A673 (cell line): ENCODE measurements at regions of chr2 and their contacts with region 1.

Region 1: DNA sequence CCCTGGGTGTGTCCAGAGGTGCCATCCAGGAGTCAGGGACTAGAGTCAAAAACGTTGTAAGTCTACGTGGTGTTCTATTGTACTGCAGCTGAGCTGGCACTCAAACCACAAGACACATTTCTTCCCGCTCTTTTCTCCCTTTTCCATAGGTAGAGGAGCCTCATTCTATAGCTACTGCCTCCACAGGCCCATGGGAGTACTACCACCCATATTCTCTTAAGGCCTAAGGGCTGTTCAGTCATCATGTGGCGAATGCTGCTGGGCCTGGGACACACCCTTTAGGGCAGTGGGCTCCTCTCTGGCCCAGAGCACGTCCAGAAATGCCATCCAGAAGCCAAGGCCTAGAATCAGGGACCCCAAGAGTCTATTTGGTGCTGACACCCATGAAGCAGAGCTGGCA is 1271.7 kb downstream of the CNTNAP5 start:
- DNase-seq: no peak
- H3K4me3 ChIP-seq: no peak overlapping the region
- H3K27ac ChIP-seq: no peak overlapping the region
- H3K4me1 ChIP-seq: no peaks in the 10 kb centered on the region
- H3K27me3 ChIP-seq: no peaks in the 10 kb centered on the region
- CTCF ChIP-seq: no peak

Region 2: GRCh38 chr2:124450481-124450880 is 846.3 kb before region 1 on chr2:
- CTCF ChIA-PET with region 1: no interaction called
- POLR2A ChIA-PET with region 1: no interaction called
- intact Hi-C with region 1: no loop called
- DNase-seq: no peak
- H3K4me3 ChIP-seq: no peak overlapping the region
- H3K27ac ChIP-seq: no peak overlapping the region
- H3K4me1 ChIP-seq: no peaks in the 10 kb centered on the region
- H3K27me3 ChIP-seq: no peaks in the 10 kb centered on the region
- CTCF ChIP-seq: no peak

Region 3: GRCh38 chr2:125272651-125273050 is 24.1 kb before region 1 on chr2:
- CTCF ChIA-PET with region 1: no interaction called
- POLR2A ChIA-PET with region 1: no interaction called
- intact Hi-C with region 1: loop called (anchors 2 kb)
- DNase-seq: no peak
- H3K4me3 ChIP-seq: no peak overlapping the region
- H3K27ac ChIP-seq: no peak overlapping the region
- H3K4me1 ChIP-seq: no peaks in the 10 kb centered on the region
- H3K27me3 ChIP-seq: no peaks in the 10 kb centered on the region
- CTCF ChIP-seq: no peak

Region 4: GRCh38 chr2:125371867-125372266 is 75.1 kb after region 1 on chr2:
- CTCF ChIA-PET with region 1: no interaction called
- POLR2A ChIA-PET with region 1: no interaction called
- intact Hi-C with region 1: no loop called
- DNase-seq: no peak
- H3K4me3 ChIP-seq: no peak overlapping the region
- H3K27ac ChIP-seq: no peak overlapping the region
- H3K4me1 ChIP-seq: no peaks in the 10 kb centered on the region
- H3K27me3 ChIP-seq: no peaks in the 10 kb centered on the region
- CTCF ChIP-seq: no peak